ENCODE measurements at regions of chr1 and their contacts with region 1.

Region 1: DNA sequence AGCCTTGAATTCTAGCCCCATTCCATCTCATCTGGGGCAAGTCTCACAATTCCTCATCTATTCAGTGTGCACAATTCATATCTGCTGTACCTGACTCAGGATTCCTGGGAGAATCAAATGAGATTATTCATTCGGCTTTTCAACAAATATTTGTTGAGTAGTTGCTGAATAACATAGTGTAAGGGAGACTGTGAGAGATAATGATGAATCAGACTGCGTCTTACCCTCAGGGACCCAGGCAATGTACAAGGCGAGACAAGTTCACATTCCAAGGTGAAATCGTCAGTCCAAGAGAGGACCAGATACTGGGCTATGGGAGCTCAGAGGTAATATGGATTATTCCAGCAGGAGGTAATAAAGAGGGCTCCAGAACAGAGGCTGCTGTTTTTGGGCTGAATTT is 67.8 kb upstream of the SMYD2 start:
- DNase-seq: no peak
- ATAC-seq: no peak
- H3K4me3 ChIP-seq: no peak overlapping the region
- H3K27ac ChIP-seq: no peak overlapping the region
- H3K4me1 ChIP-seq: 0 out of 5 replicates have a peak, but pooled peaks cover 0 to 3% of the 10 kb centered on the region in 2 experiments
- H3K27me3 ChIP-seq: peaks cover 0 to 11% of the 10 kb centered on the region in 2 experiments; a peak in 2 of 5 replicates
- CTCF ChIP-seq: no peak
- EP300 ChIP-seq: no peak
- POLR2A ChIP-seq: no peak
- RAD21 ChIP-seq: no peak

Region 2: DNA sequence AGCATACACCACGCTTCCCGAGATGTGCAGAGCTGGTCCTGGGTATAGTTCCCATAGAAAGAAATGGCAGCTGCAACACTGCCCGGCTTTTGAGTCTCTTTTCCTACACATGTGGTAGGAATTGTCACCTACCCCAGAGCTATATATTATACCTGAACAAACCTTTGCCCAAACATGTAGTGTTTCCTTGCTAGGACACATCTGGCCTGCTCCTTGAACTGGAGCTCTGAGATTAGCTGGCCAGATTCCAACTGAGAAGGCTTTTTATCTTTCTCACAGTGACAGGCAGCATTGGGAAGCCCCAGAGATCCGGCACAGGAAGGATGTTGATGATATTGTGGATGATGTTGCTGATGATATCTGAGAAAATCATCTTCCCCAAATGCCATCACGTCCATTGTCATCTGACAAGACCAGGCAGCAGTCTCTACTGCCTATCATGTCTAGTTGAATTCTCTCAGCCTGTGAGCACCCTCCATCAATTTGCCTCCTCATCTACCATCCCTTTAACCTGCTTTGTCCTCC is 47.2 kb before region 1 on chr1:
- CTCF ChIA-PET with region 1: no interaction called
- POLR2A ChIA-PET with region 1: no interaction called
- in situ Hi-C with region 1: no loop called
- intact Hi-C with region 1: no loop called
- DNase-seq: no peak
- ATAC-seq: no peak
- H3K4me3 ChIP-seq: no peak overlapping the region
- H3K27ac ChIP-seq: no peak overlapping the region
- H3K4me1 ChIP-seq: no peaks in the 10 kb centered on the region
- H3K27me3 ChIP-seq: peaks cover 4 to 13% of the 10 kb centered on the region in 2 experiments
- CTCF ChIP-seq: no peak
- EP300 ChIP-seq: no peak
- POLR2A ChIP-seq: no peak
- RAD21 ChIP-seq: no peak

Region 3: DNA sequence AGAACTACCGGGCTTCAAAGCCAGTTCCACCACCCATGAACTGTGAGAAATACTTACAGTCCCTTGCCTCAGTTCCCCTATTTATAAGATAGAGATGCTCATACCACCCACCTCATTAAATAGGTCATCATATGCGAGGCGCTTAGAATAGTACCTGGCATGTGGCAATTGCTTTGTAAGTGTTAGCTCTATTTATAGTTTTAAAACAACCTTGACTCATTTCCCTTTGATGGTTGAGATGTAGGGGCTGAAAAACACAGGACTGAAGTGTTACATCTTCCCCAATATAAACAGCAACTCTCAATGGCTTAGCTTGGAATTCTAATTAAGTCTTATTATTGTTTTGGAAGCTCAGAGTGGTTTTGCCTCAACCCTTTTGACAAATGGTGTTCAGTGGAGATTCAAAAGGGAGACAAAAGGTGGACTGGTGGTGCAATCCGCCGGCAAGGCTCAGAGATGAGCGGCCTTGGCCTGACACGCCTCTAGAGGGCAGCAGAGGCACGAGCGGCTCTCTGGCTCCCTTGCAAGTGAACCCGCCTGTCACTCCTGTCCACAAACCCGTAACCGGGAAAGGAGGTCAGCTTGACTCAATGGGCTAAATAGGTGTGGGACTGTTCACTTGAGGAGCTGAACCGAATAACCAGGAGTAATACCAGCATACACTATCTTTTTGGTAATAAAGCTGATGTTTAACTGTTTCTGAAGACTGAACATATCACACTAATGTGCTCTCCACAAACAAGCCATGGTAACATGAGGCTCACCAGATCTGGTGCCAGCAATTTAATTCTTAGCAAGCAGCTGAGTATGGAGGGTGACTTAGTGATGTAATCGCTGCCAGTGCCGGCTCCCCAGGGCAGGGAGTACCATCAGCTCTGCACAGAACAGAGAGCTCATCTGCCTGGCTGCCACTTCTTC is 48.3 kb after region 1 on chr1:
- CTCF ChIA-PET with region 1: no interaction called
- POLR2A ChIA-PET with region 1: no interaction called
- in situ Hi-C with region 1: no loop called
- intact Hi-C with region 1: loop called (anchors 2 kb)
- DNase-seq: peak; percentile 77 to 88 (median 80)
- ATAC-seq: peak; percentile 99
- H3K4me3 ChIP-seq: no peak overlapping the region
- H3K27ac ChIP-seq: no peak overlapping the region
- H3K4me1 ChIP-seq: peaks cover 0 to 4% of the 10 kb centered on the region in 2 experiments; a peak in 1 of 5 replicates
- H3K27me3 ChIP-seq: peaks cover 7 to 10% of the 10 kb centered on the region in 2 experiments; a peak in 4 of 5 replicates
- CTCF ChIP-seq: peak; percentile 91 to 97 (median 96)
- EP300 ChIP-seq: no peak
- POLR2A ChIP-seq: no peak
- RAD21 ChIP-seq: peak; percentile 84 to 94

Region 4: GRCh38 chr1:214466403-214467077 is 253.4 kb after region 1 on chr1:
- CTCF ChIA-PET with region 1: no interaction called
- POLR2A ChIA-PET with region 1: interaction called, 3 read pairs
- in situ Hi-C with region 1: no loop called
- intact Hi-C with region 1: loop called (anchors 10 kb)
- DNase-seq: no peak
- ATAC-seq: no peak
- H3K4me3 ChIP-seq: no peak overlapping the region
- H3K27ac ChIP-seq: no peak overlapping the region
- H3K4me1 ChIP-seq: peaks cover 0 to 4% of the 10 kb centered on the region in 2 experiments; a peak in 4 of 5 replicates
- H3K27me3 ChIP-seq: peaks cover 0 to 10% of the 10 kb centered on the region in 2 experiments; a peak in 2 of 5 replicates
- CTCF ChIP-seq: no peak
- EP300 ChIP-seq: no peak
- POLR2A ChIP-seq: no peak
- RAD21 ChIP-seq: no peak

Measured in K562 (cell line).